ENCODE measurements at regions of chr15 and their contacts with region 1.

Region 1: DNA sequence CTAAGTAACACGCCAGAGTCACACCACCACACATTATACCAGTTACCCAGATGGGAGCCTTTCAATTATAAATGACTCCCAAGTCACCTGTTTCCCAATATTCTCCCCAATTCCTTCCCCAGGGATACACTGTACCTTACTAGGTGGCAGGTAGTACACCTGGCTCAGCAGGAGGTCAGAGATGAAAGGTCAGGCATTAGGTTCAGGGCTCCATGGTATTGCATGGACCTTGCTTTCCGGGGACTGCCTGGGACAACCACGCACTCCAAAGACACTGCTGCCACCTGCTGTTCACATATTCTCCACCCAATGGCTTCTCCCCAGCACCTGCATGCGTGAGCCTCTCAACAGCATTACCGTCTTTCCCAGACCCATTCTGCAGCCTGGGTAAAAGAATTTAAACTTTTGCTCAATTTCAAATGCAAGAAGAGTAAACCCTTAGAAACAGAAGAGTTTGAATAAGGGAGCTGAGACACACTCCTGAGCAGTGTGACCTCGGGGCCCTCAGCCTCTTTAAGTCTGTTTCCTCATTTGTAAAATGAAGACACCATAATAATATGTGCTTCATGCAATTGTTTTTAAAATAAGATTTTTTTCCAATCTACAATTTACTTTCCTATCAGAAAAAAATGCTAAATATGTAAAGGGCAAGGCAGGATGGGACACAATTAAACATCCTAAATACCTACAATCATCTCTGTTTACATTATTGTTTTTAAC is 28.0 kb upstream of the LACTB start:
- H3K4me3 ChIP-seq: no peak overlapping the region
- H3K27ac ChIP-seq: no peak overlapping the region
- H3K4me1 ChIP-seq: no peaks in the 10 kb centered on the region
- CTCF ChIP-seq: peak; percentile 74; the same call in 1 of the 2 replicates

Region 2: DNA sequence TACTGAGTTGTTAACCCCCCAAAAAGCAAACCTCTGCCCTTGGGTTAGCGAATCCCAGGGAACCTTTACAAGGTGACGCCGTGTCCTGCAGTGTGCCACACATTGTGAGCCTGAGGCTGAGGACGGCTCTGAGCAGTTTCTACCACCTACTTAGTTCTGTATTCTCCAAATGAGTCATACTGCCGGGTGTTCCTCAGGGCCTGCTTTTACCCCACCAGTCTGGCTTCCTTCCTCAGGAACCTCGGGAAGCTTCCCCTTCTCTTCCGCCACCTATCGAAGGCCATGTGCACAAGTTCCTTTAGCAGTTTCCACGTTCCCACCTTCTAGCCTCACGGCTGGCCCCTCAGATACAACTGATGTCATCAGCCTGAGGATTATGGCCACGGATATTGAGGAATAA is 435.1 kb before region 1 on chr15:
- CTCF ChIA-PET with region 1: no interaction called
- POLR2A ChIA-PET with region 1: no interaction called
- H3K4me3 ChIP-seq: no peak overlapping the region
- H3K27ac ChIP-seq: no peak overlapping the region
- H3K4me1 ChIP-seq: no peaks in the 10 kb centered on the region
- CTCF ChIP-seq: no peak

Region 3: DNA sequence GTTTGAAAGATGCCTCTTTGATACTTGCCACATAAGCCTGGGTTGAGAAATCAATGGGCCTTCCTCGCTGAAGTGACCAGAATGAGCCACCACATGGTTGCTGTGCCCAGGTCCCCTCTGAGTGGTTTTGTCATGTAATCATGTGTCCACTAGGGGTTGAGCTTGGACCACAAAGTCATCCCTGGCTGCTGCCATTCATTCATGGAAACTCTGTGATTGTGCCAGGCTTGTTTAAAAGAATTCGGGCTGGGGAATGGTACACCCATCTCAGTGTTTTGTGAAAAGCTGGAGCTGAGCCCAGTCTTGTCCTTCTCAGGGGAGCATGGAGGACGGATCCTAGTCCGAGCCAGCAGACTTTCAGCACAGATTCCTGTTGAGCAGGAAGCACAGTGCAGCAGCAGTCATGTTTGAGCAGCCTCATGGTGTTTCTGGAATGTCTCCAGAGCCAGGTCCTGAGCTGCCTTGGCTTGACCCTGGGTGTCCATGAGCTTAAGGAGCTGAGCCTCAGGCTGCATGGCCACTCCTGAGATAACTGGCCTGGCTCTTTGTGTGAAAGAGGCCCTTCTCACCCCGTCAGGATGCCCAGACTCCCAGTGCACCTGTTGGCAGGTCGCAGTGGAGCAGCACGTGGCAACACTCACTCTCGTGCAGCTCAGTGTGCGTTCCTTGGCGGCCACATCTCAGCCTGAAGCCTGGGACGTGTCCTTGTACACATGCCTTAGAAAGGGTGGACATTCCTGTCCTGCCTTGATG is 311.4 kb before region 1 on chr15:
- CTCF ChIA-PET with region 1: interaction called, 35 read pairs
- POLR2A ChIA-PET with region 1: interaction called, 3 read pairs
- H3K4me3 ChIP-seq: no peak overlapping the region
- H3K27ac ChIP-seq: no peak overlapping the region
- H3K4me1 ChIP-seq: no peaks in the 10 kb centered on the region
- CTCF ChIP-seq: peak; percentile 39; the same call in 1 of the 2 replicates

Region 4: GRCh38 chr15:63048115-63048775 is 45.4 kb before region 1 on chr15:
- CTCF ChIA-PET with region 1: interaction called, 11 read pairs
- POLR2A ChIA-PET with region 1: interaction called, 3 read pairs
- H3K4me3 ChIP-seq: peak overlapping the region; percentile 68
- H3K27ac ChIP-seq: peak overlapping the region; percentile 68; the same call in 1 of the 2 replicates
- H3K4me1 ChIP-seq: peaks cover 29% of the 10 kb centered on the region
- CTCF ChIP-seq: peak; percentile 93